ENCODE measurements at regions of chr5 and their contacts with region 1.

Region 1: GRCh38 chr5:177390363-177391300 is 6.4 kb downstream of the SLC34A1 start:
- DNase-seq: peak; percentile 89
- H3K4me3 Mint-ChIP-seq: peak overlapping the region; percentile 52
- H3K27ac Mint-ChIP-seq: peak overlapping the region; percentile 94
- H3K4me1 Mint-ChIP-seq: peaks cover 41% of the 10 kb centered on the region
- H3K27me3 Mint-ChIP-seq: no peaks in the 10 kb centered on the region

Region 2: DNA sequence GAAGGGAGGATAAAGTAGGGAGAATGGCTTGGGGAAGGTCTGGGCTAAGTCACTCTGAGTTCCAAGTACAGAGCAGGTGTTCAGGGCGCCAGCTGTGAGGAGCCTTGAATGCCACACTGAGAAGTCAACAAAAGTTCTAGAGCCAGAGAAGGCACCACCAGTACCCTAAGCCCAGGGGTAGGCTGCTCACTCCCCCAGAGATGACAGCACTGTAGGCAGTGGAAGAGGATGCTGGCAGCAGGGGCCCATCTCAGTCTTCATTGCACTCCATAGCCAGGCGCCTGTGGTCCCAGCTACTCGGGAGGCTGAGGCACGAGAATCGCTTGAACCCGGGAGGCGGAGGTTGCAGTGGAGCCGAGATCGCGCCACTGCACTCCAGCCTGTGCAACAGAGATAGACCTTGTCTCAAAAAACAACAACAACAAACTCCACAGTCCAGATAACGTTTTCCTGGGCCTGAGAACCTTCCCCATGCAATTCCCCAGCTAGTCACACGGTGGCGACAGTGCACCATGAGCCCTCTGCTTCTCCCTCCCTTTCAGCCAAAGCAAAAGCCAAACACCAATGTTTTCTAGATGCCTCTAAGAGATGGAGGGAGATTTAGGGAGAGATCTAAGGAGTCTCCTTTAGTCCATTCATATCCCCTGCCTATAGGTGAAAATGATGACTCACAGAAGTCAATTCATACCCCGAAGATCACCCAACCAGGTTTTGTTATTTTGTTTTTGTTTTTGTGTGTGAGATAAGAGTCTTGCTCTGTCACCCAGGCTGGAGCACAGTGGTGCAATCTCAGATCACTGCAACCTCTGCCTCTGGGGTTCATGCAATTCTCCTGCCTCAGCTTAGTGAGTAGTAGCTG is 276.8 kb before region 1 on chr5:
- CTCF ChIA-PET with region 1: interaction called, 15 read pairs
- POLR2A ChIA-PET with region 1: interaction called, 5 read pairs
- DNase-seq: peak; percentile 83
- H3K4me3 Mint-ChIP-seq: no peak overlapping the region
- H3K27ac Mint-ChIP-seq: no peak overlapping the region
- H3K4me1 Mint-ChIP-seq: peaks cover 25% of the 10 kb centered on the region
- H3K27me3 Mint-ChIP-seq: no peaks in the 10 kb centered on the region

Region 3: DNA sequence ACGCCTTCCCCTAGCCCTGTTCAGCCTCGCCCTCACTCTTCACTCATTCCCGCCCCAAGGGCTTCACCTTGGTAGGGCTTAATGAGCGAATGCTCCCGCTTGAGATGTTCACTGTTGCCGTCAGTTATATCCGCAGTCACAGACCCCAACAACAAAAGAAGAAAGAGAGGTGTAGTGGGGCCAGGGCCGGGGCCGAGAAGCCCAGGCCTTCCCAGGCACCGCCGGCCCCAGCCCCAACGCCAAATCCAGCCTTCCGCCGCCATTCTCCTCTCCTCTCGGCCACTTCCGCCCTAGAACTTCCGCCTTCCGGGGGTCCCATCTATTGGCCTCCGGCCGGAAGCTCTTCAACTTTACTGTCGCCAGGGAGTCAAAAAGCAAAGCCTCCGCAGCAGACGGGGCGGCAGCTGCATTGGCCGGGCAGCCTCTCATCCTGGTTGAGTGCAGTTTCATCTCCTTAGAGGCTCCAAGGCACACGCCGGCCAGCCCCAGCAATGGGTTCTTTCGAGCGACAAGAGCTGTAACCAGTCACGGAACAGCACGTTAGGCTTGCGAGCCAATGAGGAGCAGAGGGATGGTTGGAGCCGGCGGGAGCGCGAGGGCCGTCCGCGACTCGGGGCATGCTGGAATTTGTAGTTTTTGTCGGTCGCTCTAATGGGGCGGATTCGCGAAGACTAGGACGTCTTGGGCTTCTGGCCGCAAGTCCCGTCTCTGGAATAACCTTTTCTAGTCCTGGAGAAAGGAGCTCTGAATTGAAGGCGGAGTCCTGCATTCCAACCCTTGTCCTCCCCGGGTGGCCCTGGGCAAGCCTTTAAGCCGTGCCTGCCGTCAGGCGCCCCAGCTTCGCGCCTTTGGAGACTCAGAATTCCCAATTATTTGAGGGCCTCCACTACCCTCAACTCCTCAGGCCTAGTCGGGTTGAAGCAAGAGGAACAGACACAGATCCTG is 39.0 kb before region 1 on chr5 and contains the start of gene LMAN2:
- CTCF ChIA-PET with region 1: interaction called, 28 read pairs
- POLR2A ChIA-PET with region 1: interaction called, 26 read pairs
- DNase-seq: peak; percentile 94
- H3K4me3 Mint-ChIP-seq: peak within 1 kb of the TSS; percentile 90
- H3K27ac Mint-ChIP-seq: peak within 1 kb of the TSS; percentile 99
- H3K4me1 Mint-ChIP-seq: peaks cover 70% of the 10 kb centered on the region
- H3K27me3 Mint-ChIP-seq: no peaks in the 10 kb centered on the region
- total RNA-seq, gene LMAN2: 145 to 149 TPM

Region 4: GRCh38 chr5:177378884-177379883 is 11.4 kb before region 1 on chr5:
- CTCF ChIA-PET with region 1: interaction called, 94 read pairs
- POLR2A ChIA-PET with region 1: interaction called, 27 read pairs
- DNase-seq: no peak
- H3K4me3 Mint-ChIP-seq: no peak overlapping the region
- H3K27ac Mint-ChIP-seq: no peak overlapping the region
- H3K4me1 Mint-ChIP-seq: peaks cover 35% of the 10 kb centered on the region
- H3K27me3 Mint-ChIP-seq: peaks cover 6% of the 10 kb centered on the region

Region 5: DNA sequence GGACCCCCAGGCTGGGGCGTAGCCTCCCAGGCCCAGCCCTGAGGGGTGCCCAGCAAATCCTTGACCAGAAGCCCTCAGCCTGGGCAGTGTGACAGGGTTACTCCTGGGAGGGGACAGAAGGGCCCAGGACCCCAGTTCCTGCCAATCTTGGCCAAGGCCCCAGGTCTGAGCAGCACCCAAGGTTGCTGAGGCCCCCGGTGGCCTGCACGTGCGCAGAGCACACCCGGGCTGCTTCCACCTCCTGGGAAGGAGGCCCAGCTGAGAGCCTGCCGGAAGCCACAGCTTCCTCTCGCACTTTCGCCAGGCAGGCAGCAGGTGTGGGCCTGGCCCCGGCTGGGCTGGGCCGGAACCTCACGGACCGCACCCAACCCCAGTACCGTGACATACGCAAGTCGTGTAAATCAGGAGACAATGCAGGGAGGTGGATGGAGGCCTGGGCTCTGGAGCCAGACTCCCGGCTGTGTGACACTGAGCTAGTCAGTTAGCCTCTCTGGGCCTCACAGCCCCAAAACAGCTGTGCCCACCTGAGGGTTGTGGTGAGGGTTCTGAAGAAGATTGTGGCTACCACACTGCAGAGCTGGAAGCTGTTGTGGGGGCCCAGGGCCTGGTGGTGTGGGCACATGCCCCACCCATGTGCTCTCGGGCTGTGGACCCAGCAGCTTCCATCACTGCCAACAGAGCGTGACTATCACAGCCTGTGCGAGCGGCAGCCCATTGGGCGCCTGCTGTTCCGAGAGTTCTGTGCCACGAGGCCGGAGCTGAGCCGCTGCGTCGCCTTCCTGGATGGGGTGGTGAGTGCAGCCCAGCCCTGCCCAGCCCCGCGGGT is 40.9 kb after region 1 on chr5:
- CTCF ChIA-PET with region 1: interaction called, 28 read pairs
- POLR2A ChIA-PET with region 1: interaction called, 32 read pairs
- DNase-seq: peak; percentile 89
- H3K4me3 Mint-ChIP-seq: peak overlapping the region; percentile 91
- H3K27ac Mint-ChIP-seq: peak overlapping the region; percentile 93
- H3K4me1 Mint-ChIP-seq: peaks cover 72% of the 10 kb centered on the region
- H3K27me3 Mint-ChIP-seq: no peaks in the 10 kb centered on the region

Region 6: DNA sequence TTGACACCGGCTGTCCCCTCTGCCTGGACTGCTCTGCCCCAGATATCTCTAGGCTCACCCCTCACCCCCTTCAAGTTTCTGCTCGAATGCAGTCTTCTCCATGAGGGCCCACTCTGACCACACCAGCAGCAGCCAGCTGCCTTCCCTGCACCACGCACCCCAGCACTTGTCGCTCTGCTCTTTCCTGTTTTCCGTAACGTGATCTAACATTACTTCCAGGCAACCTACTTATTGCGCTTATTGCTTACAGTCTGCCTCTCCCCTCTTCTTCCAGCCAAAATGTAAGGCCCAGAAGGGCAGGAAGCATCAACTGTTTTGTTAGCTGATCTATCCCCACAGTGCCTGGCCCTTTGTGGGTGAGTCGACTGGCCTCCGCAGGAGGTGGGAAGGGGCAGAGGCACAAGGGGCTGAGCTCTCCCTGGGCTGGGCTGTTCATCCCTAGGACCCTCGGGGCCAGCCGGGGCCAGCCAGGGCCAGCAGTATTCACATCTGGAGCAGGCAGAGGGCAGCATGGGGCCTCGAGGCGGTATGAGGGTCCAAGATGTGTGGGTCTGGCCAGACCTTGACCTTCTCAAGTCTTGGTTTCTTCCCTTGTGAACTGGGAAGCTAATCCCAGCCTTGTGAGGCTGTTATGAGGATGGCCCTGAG is 94.4 kb after region 1 on chr5:
- CTCF ChIA-PET with region 1: no interaction called
- POLR2A ChIA-PET with region 1: no interaction called
- DNase-seq: no peak
- H3K4me3 Mint-ChIP-seq: no peak overlapping the region
- H3K27ac Mint-ChIP-seq: no peak overlapping the region
- H3K4me1 Mint-ChIP-seq: peaks cover 1% of the 10 kb centered on the region
- H3K27me3 Mint-ChIP-seq: no peaks in the 10 kb centered on the region

Region 7: GRCh38 chr5:177497292-177498033 is 106.8 kb after region 1 on chr5 and contains the start of gene PDLIM7:
- CTCF ChIA-PET with region 1: interaction called, 45 read pairs
- POLR2A ChIA-PET with region 1: interaction called, 7 read pairs
- DNase-seq: peak; percentile 96
- H3K4me3 Mint-ChIP-seq: peak within 1 kb of the TSS; percentile 85
- H3K27ac Mint-ChIP-seq: peak within 1 kb of the TSS; percentile 42
- H3K4me1 Mint-ChIP-seq: peaks cover 49% of the 10 kb centered on the region
- H3K27me3 Mint-ChIP-seq: peaks cover 21% of the 10 kb centered on the region
- total RNA-seq, gene PDLIM7: 55.1 to 56.6 TPM

Region 8: DNA sequence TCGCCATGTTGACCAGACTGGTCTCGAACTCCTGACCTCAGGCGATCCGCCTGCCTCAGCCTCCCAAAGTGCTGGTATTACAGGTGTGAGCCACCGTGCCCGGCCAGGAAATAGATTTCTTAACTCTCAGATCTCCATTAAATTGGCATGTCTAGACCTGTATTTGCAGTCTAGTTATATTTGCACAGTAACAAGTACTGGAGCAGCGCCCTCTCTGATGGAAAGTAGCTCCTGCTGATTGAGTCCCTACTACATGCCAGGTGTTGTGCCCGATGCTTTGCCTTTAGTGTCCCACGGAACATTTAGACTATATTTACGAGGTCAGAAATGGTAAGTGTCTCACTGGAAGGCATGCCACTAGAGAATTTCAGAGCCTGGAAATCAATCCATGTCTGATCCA is 185.5 kb after region 1 on chr5:
- CTCF ChIA-PET with region 1: no interaction called
- POLR2A ChIA-PET with region 1: no interaction called
- DNase-seq: no peak
- H3K4me3 Mint-ChIP-seq: no peak overlapping the region
- H3K27ac Mint-ChIP-seq: no peak overlapping the region
- H3K4me1 Mint-ChIP-seq: no peaks in the 10 kb centered on the region
- H3K27me3 Mint-ChIP-seq: peaks cover 7% of the 10 kb centered on the region